AG04450 (cell line): ENCODE measurements at regions of chr2 and their contacts with region 1.

Region 1: GRCh38 chr2:41853427-41854216 is 194.2 kb upstream of the PKDCC start:
- DNase-seq: peak; percentile 39
- H3K4me3 ChIP-seq: no peak overlapping the region
- H3K27ac ChIP-seq: peak overlapping the region; percentile 25
- H3K27me3 ChIP-seq: peaks cover 16% of the 10 kb centered on the region
- CTCF ChIP-seq: peak; percentile 78

Region 2: GRCh38 chr2:41869542-41870264 is 16.1 kb after region 1 on chr2:
- CTCF ChIA-PET with region 1: interaction called, 99 read pairs
- POLR2A ChIA-PET with region 1: no interaction called
- DNase-seq: peak; percentile 30
- H3K4me3 ChIP-seq: no peak overlapping the region
- H3K27ac ChIP-seq: no peak overlapping the region
- H3K27me3 ChIP-seq: no peaks in the 10 kb centered on the region
- CTCF ChIP-seq: peak; percentile 89

Region 3: DNA sequence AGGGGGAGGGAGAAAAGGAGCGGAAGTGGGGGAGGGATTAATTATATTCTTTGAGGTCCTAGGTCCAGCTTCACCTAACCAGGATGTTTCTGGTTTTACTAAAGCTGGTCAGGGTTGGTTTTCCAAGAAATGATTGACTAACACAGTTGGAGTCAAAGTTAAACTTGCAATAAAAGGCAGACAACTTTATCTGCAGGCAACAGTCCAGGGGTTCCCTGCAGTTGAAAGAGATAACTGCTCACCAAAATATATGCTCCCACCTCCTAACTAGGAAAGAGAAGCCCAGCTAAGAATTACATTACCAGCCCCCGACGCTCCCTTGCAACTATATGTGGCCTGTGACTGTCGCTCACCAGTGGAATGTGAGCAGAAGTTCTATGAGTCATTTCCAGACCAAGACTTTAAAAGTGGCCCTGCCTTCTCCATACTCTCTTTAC is 54.2 kb after region 1 on chr2:
- CTCF ChIA-PET with region 1: interaction called, 13 read pairs
- POLR2A ChIA-PET with region 1: interaction called, 4 read pairs
- DNase-seq: no peak
- H3K4me3 ChIP-seq: no peak overlapping the region
- H3K27ac ChIP-seq: no peak overlapping the region
- H3K27me3 ChIP-seq: peaks cover 2% of the 10 kb centered on the region
- CTCF ChIP-seq: no peak

Region 4: GRCh38 chr2:42095923-42096408 is 242.3 kb after region 1 on chr2:
- CTCF ChIA-PET with region 1: interaction called, 418 read pairs
- POLR2A ChIA-PET with region 1: no interaction called
- DNase-seq: peak; percentile 61
- H3K4me3 ChIP-seq: no peak overlapping the region
- H3K27ac ChIP-seq: no peak overlapping the region
- H3K27me3 ChIP-seq: no peaks in the 10 kb centered on the region
- CTCF ChIP-seq: peak; percentile 75